ENCODE measurements at regions of chr17 and their contacts with region 1.

Region 1: GRCh38 chr17:55314784-55315491 is 50.2 kb downstream of the HLF start:
- DNase-seq: peak; percentile 25
- H3K4me3 Mint-ChIP-seq: peak overlapping the region; percentile 51
- H3K27ac Mint-ChIP-seq: peak overlapping the region; percentile 84
- H3K4me1 Mint-ChIP-seq: peaks cover 30% of the 10 kb centered on the region
- H3K27me3 Mint-ChIP-seq: no peaks in the 10 kb centered on the region

Region 2: DNA sequence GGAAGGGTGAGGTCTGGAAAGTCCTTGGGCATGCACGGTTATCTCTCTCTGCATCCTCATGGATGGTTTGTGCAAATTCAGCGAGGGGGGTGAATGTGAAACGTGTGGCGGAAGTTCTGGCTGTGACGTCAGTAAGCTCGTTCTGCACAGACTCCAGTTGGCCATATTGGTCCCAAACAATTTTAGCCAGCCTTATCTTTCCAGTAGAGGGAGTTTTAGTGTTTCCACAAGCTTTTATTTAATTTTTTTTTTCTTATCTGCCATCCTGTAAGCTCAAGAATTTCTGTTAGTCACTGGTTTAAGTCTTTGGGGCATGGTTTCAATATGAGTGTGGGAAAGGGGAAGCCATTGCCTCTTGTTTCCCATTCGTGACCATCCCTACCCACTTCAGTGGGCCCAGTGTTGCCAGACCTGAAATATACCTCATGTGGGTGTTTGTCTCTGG is 11.2 kb before region 1 on chr17:
- intact Hi-C with region 1: loop called (anchors 1 kb)
- DNase-seq: no peak
- H3K4me3 Mint-ChIP-seq: no peak overlapping the region
- H3K27ac Mint-ChIP-seq: peak overlapping the region; percentile 17
- H3K4me1 Mint-ChIP-seq: peaks cover 19% of the 10 kb centered on the region
- H3K27me3 Mint-ChIP-seq: no peaks in the 10 kb centered on the region

Measured in activated T-helper 2 cell treated with anti-CD3 and anti-CD28 coated beads, Interferon-gamma antibody, Interleukin-2, Interleukin-4, amounts not matched to agents 10 μg/mL and 5 μg/mL and 100 μg/mL, durations not matched to agents 14 hours and 24 hours and 36 hours (primary cell).